Panc1 (cell line): ENCODE measurements at regions of chr6 and their contacts with region 1.

Region 1: GRCh38 chr6:140684776-140685550 is 1310.5 kb upstream of the CITED2 start:
- DNase-seq: no peak
- ATAC-seq: no peak
- H3K4me3 ChIP-seq: no peak overlapping the region
- H3K27ac ChIP-seq: 0 out of 2 replicates have a peak overlapping the region, but pooled peaks have one; percentile 12
- H3K4me1 ChIP-seq: no peaks in the 10 kb centered on the region
- H3K27me3 ChIP-seq: no peaks in the 10 kb centered on the region
- CTCF ChIP-seq: no peak

Region 2: GRCh38 chr6:140043336-140043735 is 641.6 kb before region 1 on chr6:
- CTCF ChIA-PET with region 1: no interaction called
- POLR2A ChIA-PET with region 1: no interaction called
- in situ Hi-C with region 1: no loop called
- intact Hi-C with region 1: no loop called
- DNase-seq: no peak
- ATAC-seq: peak; percentile 88
- H3K4me3 ChIP-seq: no peak overlapping the region
- H3K27ac ChIP-seq: peak overlapping the region; percentile 72; the same call in 1 of the 2 replicates
- H3K4me1 ChIP-seq: no peaks in the 10 kb centered on the region; the same call in 1 of the 2 replicates
- H3K27me3 ChIP-seq: no peaks in the 10 kb centered on the region
- CTCF ChIP-seq: no peak

Region 3: DNA sequence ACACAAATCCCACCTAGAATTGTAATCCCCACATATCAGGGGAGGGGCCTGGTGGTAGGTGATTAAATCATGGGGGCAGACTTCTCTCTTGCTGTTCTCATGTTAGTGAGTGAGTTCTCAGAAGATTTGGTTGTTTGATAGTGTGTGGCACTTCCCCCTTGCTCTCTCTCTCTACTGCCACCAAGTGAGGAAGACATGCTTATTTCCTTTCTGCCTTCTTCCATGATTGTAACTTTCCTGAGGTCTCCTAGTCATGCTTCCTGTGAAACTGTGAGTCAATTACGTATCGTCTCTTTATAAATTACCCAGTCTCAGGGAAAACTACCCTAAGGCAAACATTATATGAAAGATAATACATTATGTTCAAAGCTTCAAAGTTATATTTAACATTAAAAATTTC is 13.0 kb before region 1 on chr6:
- CTCF ChIA-PET with region 1: no interaction called
- POLR2A ChIA-PET with region 1: interaction called, 11 read pairs
- in situ Hi-C with region 1: no loop called
- intact Hi-C with region 1: no loop called
- DNase-seq: no peak
- ATAC-seq: no peak
- H3K4me3 ChIP-seq: no peak overlapping the region
- H3K27ac ChIP-seq: no peak overlapping the region
- H3K4me1 ChIP-seq: no peaks in the 10 kb centered on the region
- H3K27me3 ChIP-seq: no peaks in the 10 kb centered on the region
- CTCF ChIP-seq: peak; percentile 19; the same call in 1 of the 2 replicates